Activated naive CD4-positive, alpha-beta T cell treated with anti-CD3 and anti-CD28 coated beads for 36 hours (primary cell): ENCODE measurements at regions of chr3 and their contacts with region 1.

Region 1: GRCh38 chr3:97971677-97972567 is at the start of gene RIOX2:
- DNase-seq: peak; percentile 84
- H3K4me3 Mint-ChIP-seq: peak within 1 kb of the TSS; percentile 87
- H3K27ac Mint-ChIP-seq: peak within 1 kb of the TSS; percentile 89
- H3K4me1 Mint-ChIP-seq: peaks cover 51% of the 10 kb centered on the region
- H3K27me3 Mint-ChIP-seq: no peaks in the 10 kb centered on the region
- total RNA-seq, gene RIOX2: 26.3 to 32.6 TPM

Region 2: DNA sequence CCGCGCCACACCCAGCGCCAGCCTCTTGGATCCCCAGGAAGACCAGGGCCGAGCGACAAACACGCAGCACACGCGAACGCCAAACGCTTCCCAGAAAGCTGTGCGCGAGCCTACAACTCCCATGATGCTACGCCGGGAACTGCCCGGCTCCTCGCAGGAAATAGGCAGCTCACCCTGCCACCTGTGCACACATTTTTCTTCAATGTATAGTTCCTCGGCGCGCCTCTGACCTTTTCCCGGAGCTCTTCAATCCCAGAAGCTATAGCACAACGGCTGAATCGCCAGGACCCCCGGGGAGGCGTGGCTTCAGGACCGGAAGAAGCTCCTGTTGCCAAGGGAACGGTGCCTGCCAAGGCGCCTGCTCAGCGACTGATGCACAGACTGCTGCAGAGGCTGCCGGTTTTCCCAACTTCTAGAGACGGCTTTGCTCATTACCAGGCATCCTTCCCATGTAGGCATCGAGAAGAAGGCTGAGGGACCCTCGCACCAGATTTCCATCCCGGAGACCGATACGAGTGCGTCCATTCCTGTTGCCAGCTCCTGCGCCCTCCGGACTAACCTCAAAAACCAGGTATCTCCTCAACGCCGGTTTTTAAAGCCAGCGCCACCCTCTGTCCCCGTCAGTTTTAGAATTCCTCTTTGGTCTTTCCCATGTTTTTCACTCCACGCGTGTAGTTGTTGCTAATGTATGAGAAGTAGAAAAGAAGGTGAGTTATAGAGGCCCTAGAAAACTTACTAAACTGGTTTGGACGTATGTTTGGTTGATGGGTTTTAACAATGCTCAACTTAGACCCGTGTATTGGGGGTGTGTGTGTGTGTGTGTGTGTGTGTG is 207.3 kb before region 1 on chr3 and contains the start of gene ARL6:
- CTCF ChIA-PET with region 1: no interaction called
- intact Hi-C with region 1: loop called (anchors 1 kb)
- DNase-seq: peak; percentile 81
- H3K4me3 Mint-ChIP-seq: peak within 1 kb of the TSS; percentile 94
- H3K27ac Mint-ChIP-seq: peak within 1 kb of the TSS; percentile 92
- H3K4me1 Mint-ChIP-seq: peaks cover 21% of the 10 kb centered on the region
- H3K27me3 Mint-ChIP-seq: no peaks in the 10 kb centered on the region
- total RNA-seq, gene ARL6: 3.0 to 4.7 TPM

Region 3: DNA sequence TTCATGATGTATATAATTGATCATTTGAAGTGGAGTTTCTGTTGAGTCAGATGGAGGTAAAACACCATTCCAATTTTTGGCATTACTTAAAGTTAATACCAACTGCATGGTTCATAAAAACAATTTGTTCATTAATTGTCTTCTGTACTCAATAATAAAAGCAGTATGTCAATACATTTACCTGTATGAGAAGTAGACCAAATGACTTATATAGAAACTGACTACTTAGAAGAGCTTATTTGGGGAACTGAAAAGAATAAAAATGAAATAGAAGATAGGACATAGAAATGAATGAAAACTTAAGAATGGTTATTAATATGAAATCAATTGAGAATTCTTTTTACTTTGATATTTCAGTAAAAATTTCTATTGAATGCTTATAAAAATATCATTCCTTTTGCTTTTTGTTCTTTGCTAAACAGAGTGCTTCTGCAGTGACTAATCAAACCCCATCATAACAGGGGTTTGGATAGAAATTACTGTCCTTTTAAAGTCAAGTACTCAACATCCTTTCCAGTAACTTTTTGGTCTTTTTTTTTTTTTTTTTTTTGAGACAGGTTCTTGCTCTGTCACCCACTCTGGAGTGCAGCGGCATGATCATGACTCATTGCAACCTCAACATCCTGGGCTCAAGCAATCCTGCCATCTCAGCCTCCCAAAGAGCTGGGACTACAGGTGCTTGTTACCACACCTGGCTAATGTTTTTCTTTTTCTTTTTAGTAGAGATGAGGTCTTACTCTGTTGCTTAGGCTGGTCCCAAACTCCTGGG is 156.6 kb before region 1 on chr3:
- CTCF ChIA-PET with region 1: interaction called, 3 read pairs
- intact Hi-C with region 1: loop called (anchors 1 kb)
- DNase-seq: peak; percentile 77
- H3K4me3 Mint-ChIP-seq: no peak overlapping the region
- H3K27ac Mint-ChIP-seq: peak overlapping the region; percentile 66
- H3K4me1 Mint-ChIP-seq: peaks cover 13% of the 10 kb centered on the region
- H3K27me3 Mint-ChIP-seq: peaks cover 1% of the 10 kb centered on the region

Region 4: GRCh38 chr3:97910931-97911351 is 61.0 kb before region 1 on chr3:
- CTCF ChIA-PET with region 1: no interaction called
- intact Hi-C with region 1: loop called (anchors 2 kb)
- DNase-seq: peak; percentile 14
- H3K4me3 Mint-ChIP-seq: peak overlapping the region; percentile 72
- H3K27ac Mint-ChIP-seq: peak overlapping the region; percentile 79
- H3K4me1 Mint-ChIP-seq: peaks cover 17% of the 10 kb centered on the region
- H3K27me3 Mint-ChIP-seq: no peaks in the 10 kb centered on the region

Region 5: GRCh38 chr3:98556164-98557130 is 584.5 kb after region 1 on chr3:
- CTCF ChIA-PET with region 1: no interaction called
- intact Hi-C with region 1: loop called (anchors 5 kb)
- DNase-seq: peak; percentile 87
- H3K4me3 Mint-ChIP-seq: peak overlapping the region; percentile 30
- H3K27ac Mint-ChIP-seq: peak overlapping the region; percentile 83
- H3K4me1 Mint-ChIP-seq: peaks cover 76% of the 10 kb centered on the region
- H3K27me3 Mint-ChIP-seq: peaks cover 5% of the 10 kb centered on the region